ENCODE measurements at regions of chr12 and their contacts with region 1.

Region 1: DNA sequence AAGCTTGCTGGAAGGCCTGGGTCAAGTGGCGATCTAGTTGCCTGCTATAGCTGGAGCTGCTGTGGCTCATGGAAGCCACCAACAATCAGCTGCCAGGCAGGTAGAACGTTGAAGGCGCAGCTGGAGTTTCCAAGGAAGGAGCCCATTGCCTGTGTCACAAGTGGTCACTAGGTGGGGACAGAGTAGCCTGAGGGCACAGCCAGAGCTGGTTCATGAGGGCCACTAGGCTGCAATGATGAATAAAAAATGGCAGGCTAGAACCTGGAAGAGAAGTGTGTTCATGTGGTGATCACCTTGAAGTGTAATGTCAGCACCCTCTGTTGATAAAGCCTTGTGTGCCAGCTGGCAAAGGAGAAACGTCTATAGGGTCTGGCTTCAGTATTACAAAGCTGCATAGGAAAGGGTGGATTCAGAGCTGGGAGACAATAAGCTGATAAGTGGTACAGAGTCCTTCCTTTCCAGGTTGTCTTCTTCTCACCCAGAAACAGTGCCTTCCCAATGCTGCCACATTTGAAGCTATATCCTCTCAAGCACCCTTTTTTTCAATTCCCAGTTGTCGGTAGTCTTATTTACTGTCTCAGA is 165.8 kb downstream of the EMP1 start:
- DNase-seq: peak; percentile 61
- ATAC-seq: peak; percentile 86

Region 2: GRCh38 chr12:13425766-13426165 is 63.4 kb after region 1 on chr12:
- intact Hi-C with region 1: no loop called
- DNase-seq: no peak
- ATAC-seq: no peak

Region 3: DNA sequence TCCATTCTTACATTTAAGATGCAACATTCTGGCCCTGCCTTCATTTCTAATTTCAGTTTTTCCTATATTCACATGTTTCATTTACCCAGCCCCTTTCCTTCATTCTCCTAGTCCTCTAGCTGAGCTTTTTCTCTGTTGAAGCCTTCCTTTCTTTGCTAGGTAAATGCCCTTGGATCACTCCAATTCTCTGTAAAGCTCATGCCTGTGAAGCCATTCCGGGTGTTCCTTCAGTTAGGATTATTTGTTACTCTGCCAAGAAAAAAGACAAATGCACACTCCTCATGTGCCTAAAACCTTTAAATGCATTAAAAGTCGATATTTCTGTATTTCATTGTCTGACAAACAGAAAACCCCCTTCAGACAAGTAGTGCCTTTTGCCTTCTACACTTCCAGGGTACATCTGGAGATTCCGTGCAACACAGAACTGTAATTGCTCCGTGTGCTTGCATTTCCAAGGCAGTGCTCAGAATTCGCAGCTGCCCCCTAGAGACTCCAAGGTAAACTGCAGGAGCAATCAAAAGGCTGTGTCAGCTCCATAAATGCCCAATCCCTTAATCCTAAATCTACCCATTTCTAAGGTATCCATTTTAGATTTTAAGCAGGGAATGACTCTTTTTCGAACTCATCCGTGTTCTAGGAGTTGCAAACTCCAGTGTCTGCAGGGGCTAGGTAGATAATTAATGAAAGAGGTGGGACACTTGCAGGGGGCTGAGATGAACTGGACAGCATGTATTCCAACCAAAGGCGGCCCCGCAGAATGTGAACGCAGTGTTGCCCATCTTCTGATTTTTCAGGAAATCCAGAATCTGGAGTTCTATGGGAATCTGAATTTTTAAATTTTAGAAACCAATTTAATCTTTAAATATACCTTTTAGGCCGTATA is 298.9 kb after region 1 on chr12:
- intact Hi-C with region 1: loop called (anchors 5 kb)
- DNase-seq: peak; percentile 29
- ATAC-seq: peak; percentile 75